Activated CD8-positive, alpha-beta T cell treated with anti-CD3 and anti-CD28 coated beads, Interleukin-2, amount 10 ng/mL, durations not matched to agents 7 days and 5 days (primary cell): ENCODE measurements at regions of chr17 and their contacts with region 1.

Region 1: DNA sequence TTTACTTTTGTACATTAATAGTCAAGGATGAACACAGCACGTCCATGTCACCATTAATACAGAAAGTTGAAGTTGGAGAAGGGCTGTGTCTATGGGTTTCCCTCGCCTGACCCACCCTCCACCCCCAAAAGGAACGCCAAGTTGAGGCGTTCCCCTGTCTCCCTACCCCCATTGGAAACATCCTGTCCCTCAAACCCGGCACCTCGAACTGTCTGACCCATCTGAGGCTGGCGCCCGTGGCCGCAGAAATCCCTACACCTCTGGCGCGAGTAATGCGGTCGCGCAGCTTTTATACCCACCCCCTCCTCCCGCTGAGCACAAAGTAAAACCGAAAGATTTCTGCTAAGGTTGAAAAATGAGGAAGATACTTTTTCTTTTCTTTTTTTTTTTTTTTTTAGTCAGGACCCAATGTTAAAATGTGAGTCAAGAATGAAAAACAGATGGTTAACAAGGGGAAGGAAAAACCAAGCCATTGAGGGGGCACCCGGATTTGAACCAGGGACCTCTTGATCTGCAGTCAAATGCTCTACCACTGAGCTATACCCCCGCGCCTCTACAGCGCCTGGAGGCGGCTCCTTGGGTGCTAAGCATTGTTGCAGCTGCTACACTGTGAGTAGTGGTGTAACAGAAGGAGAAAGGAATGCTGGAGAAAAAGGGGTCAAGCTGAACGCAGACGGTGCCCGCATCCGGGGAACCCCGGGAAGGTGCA is 887 bp upstream of the LASP1 start:
- DNase-seq: peak; percentile 90
- ATAC-seq: peak; percentile 54
- H3K4me3 Mint-ChIP-seq: peak overlapping the region; percentile 99
- H3K27ac Mint-ChIP-seq: peak overlapping the region; percentile 85
- H3K4me1 Mint-ChIP-seq: peaks cover 42% of the 10 kb centered on the region
- H3K27me3 Mint-ChIP-seq: no peaks in the 10 kb centered on the region

Region 2: DNA sequence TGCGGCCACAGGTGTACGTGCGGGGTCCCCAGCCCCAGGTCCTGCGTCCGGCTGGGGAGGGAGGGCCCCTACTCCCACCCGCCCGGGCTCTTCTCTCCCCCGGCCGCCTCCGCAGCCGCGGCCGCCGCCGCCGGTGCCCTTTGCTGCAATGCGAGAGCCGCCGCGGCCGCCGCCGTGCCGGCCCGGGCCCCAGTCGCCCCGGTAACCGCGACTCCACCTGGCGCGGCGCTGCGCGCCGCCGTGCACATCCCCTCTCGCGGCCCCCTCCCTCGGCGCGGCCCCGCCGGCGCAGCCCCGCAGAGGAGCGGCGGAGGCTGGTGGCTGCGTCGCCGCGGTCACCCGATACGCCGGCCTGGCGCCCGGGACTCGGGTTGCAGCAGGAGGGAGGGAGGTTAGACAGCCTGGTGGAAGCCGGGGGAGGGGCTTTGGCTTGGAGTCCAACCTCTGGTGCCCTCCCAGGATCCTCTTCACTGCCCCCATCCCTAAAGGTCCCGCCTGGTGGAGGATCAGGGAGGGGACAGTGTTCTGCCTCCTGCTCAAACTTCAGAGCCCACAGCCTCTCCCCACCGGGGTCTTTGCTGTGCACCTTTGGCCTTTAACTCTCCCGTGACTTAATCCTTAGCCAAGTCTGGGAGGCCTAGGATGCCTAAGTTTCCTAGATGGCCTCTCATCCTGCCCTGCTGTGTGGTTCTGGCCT is 296.2 kb before region 1 on chr17:
- CTCF ChIA-PET with region 1: no interaction called
- POLR2A ChIA-PET with region 1: no interaction called
- DNase-seq: no peak
- ATAC-seq: no peak
- H3K4me3 Mint-ChIP-seq: no peak overlapping the region
- H3K27ac Mint-ChIP-seq: no peak overlapping the region
- H3K4me1 Mint-ChIP-seq: peaks cover 2% of the 10 kb centered on the region
- H3K27me3 Mint-ChIP-seq: peaks cover 79% of the 10 kb centered on the region

Region 3: DNA sequence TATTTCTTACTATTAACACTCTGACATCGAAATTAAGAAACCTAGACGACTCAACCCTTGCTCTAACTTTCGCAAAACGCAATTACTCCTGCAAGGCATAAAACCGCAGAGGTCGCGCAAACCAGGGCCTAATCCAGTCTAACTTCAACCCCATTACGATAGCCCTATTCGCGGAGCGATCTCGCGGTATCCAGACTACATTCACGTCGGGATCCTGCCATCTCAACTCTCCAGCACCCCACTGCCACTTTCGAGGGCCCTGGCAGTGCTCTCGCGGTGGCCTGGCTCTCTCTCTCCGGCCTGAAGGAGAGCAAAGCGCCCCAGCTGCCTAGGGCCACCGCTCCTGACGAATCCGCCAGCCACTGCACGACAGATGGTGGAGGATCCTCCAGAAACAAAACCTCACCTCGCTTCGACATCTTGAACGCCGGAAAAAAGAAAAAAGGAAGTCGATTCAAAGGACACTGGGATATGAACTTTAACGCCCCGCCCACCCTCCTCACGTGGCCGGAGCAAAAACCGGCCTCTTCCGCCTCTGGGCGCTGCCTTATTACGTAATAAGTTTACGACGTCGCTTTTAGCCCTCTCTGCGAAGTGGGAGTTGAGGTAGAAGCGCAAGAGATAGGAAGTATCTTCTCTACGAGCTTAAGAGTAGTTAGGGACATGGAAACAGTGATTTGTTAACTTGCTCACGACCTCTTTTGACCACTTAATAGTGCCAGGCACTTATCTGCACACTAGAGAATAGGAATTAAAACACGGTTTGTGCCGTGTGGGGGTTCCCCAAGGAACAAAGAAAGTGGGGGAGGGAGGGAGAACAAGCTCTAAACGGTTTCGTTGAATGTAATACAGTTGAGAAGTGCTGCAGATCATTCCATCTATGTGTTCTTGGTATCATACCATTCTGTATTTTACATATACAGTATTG is 15.4 kb before region 1 on chr17 and contains the start of gene RPL23:
- CTCF ChIA-PET with region 1: interaction called, 41 read pairs
- POLR2A ChIA-PET with region 1: interaction called, 113 read pairs
- DNase-seq: peak; percentile 96
- ATAC-seq: peak; percentile 88
- H3K4me3 Mint-ChIP-seq: peak within 1 kb of the TSS; percentile 99
- H3K27ac Mint-ChIP-seq: peak within 1 kb of the TSS; percentile 99
- H3K4me1 Mint-ChIP-seq: peaks cover 39% of the 10 kb centered on the region
- H3K27me3 Mint-ChIP-seq: no peaks in the 10 kb centered on the region
- total RNA-seq, gene RPL23: 1,130 to 1,164 TPM

Region 4: GRCh38 chr17:38879878-38880682 is 11.1 kb after region 1 on chr17:
- CTCF ChIA-PET with region 1: interaction called, 21 read pairs
- POLR2A ChIA-PET with region 1: interaction called, 25 read pairs
- DNase-seq: peak; percentile 67
- ATAC-seq: peak; percentile 5
- H3K4me3 Mint-ChIP-seq: peak overlapping the region; percentile 66
- H3K27ac Mint-ChIP-seq: peak overlapping the region; percentile 88
- H3K4me1 Mint-ChIP-seq: peaks cover 90% of the 10 kb centered on the region
- H3K27me3 Mint-ChIP-seq: no peaks in the 10 kb centered on the region

Region 5: GRCh38 chr17:38893607-38894006 is 24.6 kb after region 1 on chr17:
- CTCF ChIA-PET with region 1: interaction called, 82 read pairs
- POLR2A ChIA-PET with region 1: interaction called, 57 read pairs
- DNase-seq: peak; percentile 73
- ATAC-seq: peak; percentile 48
- H3K4me3 Mint-ChIP-seq: peak overlapping the region; percentile 38
- H3K27ac Mint-ChIP-seq: peak overlapping the region; percentile 94
- H3K4me1 Mint-ChIP-seq: peaks cover 97% of the 10 kb centered on the region
- H3K27me3 Mint-ChIP-seq: no peaks in the 10 kb centered on the region